Left lung (tissue), 14 donors: ENCODE measurements at regions of chr10 and their contacts with region 1.

Region 1: DNA sequence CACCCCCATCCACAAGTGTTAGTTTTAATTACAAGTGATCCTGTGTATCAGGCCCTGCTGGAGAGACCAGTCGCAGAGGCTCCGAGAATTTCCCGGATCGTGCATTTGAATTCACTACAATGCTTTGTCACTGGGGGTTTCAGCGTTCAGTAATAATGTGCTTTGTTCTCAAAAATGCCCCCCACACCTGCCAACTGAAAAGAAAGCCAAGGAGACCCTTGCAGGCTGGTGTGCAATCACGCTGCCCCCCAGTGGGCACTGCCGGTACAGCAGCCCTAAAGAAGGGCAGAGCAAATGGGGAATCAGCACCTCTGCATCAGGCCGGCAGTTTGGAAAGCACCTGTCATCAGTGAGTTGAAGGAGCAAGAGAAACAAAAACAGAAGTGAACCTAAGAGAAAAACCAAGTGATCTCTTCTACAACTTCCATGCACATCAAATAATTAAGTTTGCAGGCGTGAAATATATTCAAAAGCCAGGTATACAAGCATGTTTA is 177.6 kb downstream of the PARD3 start:
- DNase-seq: peak in 3 of 4 donors; percentile 46 to 81 (median 68)
- ATAC-seq: peak; percentile 90
- H3K4me3 ChIP-seq: no peak overlapping the region
- H3K27ac ChIP-seq: no peak overlapping the region
- H3K4me1 ChIP-seq: peaks cover 7 to 17% of the 10 kb centered on the region in 2 donors
- H3K27me3 ChIP-seq: no peaks in the 10 kb centered on the region
- CTCF ChIP-seq: peak; percentile 90 to 97

Region 2: DNA sequence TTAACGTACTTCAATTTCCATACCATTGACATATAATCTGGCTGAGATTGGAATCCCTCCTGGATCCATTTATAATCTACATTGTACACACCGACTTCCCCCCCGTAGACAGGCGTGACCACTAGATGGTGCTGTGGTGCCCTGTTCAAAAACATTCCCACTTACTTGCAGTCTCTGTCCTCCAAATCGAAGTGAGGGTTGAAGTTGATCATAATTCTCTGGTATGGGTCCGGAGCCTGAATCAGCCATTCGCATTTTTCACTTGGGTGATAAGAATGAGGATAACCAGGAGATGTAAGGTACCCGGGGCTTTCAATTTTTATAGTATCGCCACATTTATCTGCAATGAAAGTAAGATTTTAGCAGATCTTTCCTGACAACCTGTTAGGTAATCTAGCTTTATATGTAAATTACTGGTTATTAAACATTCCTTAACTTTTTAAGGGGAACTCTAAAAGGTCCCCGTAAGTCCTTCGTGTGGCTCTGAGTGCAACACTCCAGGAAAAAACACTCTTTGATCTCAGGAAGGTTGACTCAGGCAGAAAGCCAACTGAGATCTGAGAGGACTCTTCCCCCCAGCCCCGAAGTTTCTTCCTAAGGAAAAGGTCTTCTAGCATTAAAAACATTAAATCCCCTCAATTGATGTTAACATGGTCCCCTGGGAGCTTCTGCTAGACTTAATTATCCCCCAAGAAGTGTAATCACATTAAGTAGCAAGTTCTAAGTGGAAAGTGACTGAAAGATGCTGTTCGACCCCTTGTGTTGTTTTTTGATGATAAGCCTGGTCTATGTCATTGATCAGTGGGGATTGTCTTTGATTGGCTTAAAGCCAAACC is 1306.7 kb before region 1 on chr10:
- intact Hi-C with region 1: loop called in 1 of 2 experiments (anchors 10 kb)
- DNase-seq: peak; percentile 66 to 91 (median 82)
- ATAC-seq: peak; percentile 52
- H3K4me3 ChIP-seq: peak overlapping the region; percentile 65 to 76
- H3K27ac ChIP-seq: peak overlapping the region; percentile 93
- H3K4me1 ChIP-seq: peaks cover 0 to 58% of the 10 kb centered on the region in 2 donors
- H3K27me3 ChIP-seq: peaks cover 0 to 45% of the 10 kb centered on the region in 2 donors
- CTCF ChIP-seq: peak; percentile 79 to 85